CD4-positive, alpha-beta T cell (primary cell): ENCODE measurements at regions of chr3 and their contacts with region 1.

Region 1: GRCh38 chr3:170357176-170357919 is at the start of gene SKIL:
- DNase-seq: peak; percentile 93 to 100 (median 96)
- ATAC-seq: peak; percentile 74
- H3K4me3 ChIP-seq: peak within 1 kb of the TSS; percentile 73
- H3K4me3 Mint-ChIP-seq: peak within 1 kb of the TSS; percentile 98
- H3K27ac ChIP-seq: peak within 1 kb of the TSS; percentile 89 to 97
- H3K27ac Mint-ChIP-seq: peak within 1 kb of the TSS; percentile 98
- H3K4me1 ChIP-seq: peaks cover 35% of the 10 kb centered on the region
- H3K4me1 Mint-ChIP-seq: peaks cover 63% of the 10 kb centered on the region
- H3K27me3 ChIP-seq: no peaks in the 10 kb centered on the region
- H3K27me3 Mint-ChIP-seq: no peaks in the 10 kb centered on the region
- CTCF ChIP-seq: no peak
- total RNA-seq, gene SKIL: 121 to 130 TPM

Region 2: GRCh38 chr3:169764452-169765274 is 592.7 kb before region 1 on chr3 and contains the start of gene TERC:
- CTCF ChIA-PET with region 1: no interaction called
- POLR2A ChIA-PET with region 1: interaction called, 19 read pairs
- intact Hi-C with region 1: loop called (anchors 2 to 10 kb)
- DNase-seq: peak; percentile 82 to 98 (median 92)
- ATAC-seq: peak; percentile 82
- H3K4me3 ChIP-seq: peak within 1 kb of the TSS; percentile 93
- H3K4me3 Mint-ChIP-seq: peak within 1 kb of the TSS; percentile 98
- H3K27ac ChIP-seq: peak within 1 kb of the TSS; percentile 95 to 96
- H3K27ac Mint-ChIP-seq: peak within 1 kb of the TSS; percentile 97
- H3K4me1 ChIP-seq: peaks cover 27% of the 10 kb centered on the region
- H3K4me1 Mint-ChIP-seq: peaks cover 38% of the 10 kb centered on the region
- H3K27me3 ChIP-seq: no peaks in the 10 kb centered on the region
- H3K27me3 Mint-ChIP-seq: no peaks in the 10 kb centered on the region
- CTCF ChIP-seq: no peak
- total RNA-seq, gene TERC: 9.0 to 10.4 TPM

Region 3: GRCh38 chr3:170037463-170038433 is 319.6 kb before region 1 on chr3 and contains the start of gene GPR160:
- CTCF ChIA-PET with region 1: no interaction called
- POLR2A ChIA-PET with region 1: interaction called, 3 read pairs
- intact Hi-C with region 1: loop called in 1 of 2 experiments (anchors 5 kb)
- DNase-seq: peak; percentile 67 to 89 (median 74)
- ATAC-seq: peak; percentile 64
- H3K4me3 ChIP-seq: peak within 1 kb of the TSS; percentile 83
- H3K4me3 Mint-ChIP-seq: peak within 1 kb of the TSS; percentile 93
- H3K27ac ChIP-seq: peak within 1 kb of the TSS in 1 of 2 donors; percentile 41
- H3K27ac Mint-ChIP-seq: peak within 1 kb of the TSS; percentile 67
- H3K4me1 ChIP-seq: peaks cover 43% of the 10 kb centered on the region
- H3K4me1 Mint-ChIP-seq: peaks cover 43% of the 10 kb centered on the region
- H3K27me3 ChIP-seq: no peaks in the 10 kb centered on the region
- H3K27me3 Mint-ChIP-seq: no peaks in the 10 kb centered on the region
- CTCF ChIP-seq: peak; percentile 85
- total RNA-seq, gene GPR160: 5.7 TPM

Region 4: GRCh38 chr3:170221924-170222646 is 135.3 kb before region 1 on chr3 and contains the start of gene PRKCI:
- CTCF ChIA-PET with region 1: no interaction called
- POLR2A ChIA-PET with region 1: interaction called, 20 read pairs
- intact Hi-C with region 1: loop called (anchors 2 to 5 kb)
- DNase-seq: peak; percentile 79 to 96 (median 86)
- ATAC-seq: peak; percentile 84
- H3K4me3 ChIP-seq: peak within 1 kb of the TSS; percentile 72
- H3K4me3 Mint-ChIP-seq: peak within 1 kb of the TSS; percentile 95
- H3K27ac ChIP-seq: peak within 1 kb of the TSS; percentile 55 to 78
- H3K27ac Mint-ChIP-seq: peak within 1 kb of the TSS; percentile 93
- H3K4me1 ChIP-seq: peaks cover 15% of the 10 kb centered on the region
- H3K4me1 Mint-ChIP-seq: peaks cover 32% of the 10 kb centered on the region
- H3K27me3 ChIP-seq: no peaks in the 10 kb centered on the region
- H3K27me3 Mint-ChIP-seq: no peaks in the 10 kb centered on the region
- CTCF ChIP-seq: no peak
- total RNA-seq, gene PRKCI: 16.4 to 18.0 TPM

Region 5: DNA sequence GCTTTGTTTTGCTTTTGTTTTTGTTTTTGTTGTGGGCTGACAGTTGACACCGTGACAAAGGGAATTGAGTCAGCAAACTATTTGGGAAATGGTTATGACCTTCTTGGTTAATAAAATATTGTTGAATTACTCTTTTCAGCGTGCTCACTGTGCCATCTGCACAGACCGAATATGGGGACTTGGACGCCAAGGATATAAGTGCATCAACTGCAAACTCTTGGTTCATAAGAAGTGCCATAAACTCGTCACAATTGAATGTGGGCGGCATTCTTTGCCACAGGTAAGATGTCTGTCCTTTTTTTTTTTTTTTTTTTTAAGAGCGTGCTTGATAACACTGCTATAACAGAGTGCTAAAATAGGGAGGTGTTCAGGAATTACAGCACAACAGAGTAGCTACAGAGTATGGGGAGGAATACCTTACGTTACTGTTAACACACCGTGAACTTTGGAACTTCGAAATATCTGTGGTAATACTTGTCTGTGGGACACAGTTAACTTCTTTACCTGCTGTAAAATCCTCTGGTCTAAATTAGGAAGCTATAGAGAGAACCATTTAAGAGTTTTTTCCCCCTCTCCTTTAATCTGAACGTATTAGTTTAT is 87.0 kb before region 1 on chr3:
- CTCF ChIA-PET with region 1: no interaction called
- POLR2A ChIA-PET with region 1: no interaction called
- intact Hi-C with region 1: no loop called
- DNase-seq: no peak
- ATAC-seq: no peak
- H3K4me3 ChIP-seq: no peak overlapping the region
- H3K4me3 Mint-ChIP-seq: no peak overlapping the region
- H3K27ac ChIP-seq: no peak overlapping the region
- H3K27ac Mint-ChIP-seq: no peak overlapping the region
- H3K4me1 ChIP-seq: no peaks in the 10 kb centered on the region
- H3K4me1 Mint-ChIP-seq: no peaks in the 10 kb centered on the region
- H3K27me3 ChIP-seq: no peaks in the 10 kb centered on the region
- H3K27me3 Mint-ChIP-seq: no peaks in the 10 kb centered on the region
- CTCF ChIP-seq: no peak

Region 6: DNA sequence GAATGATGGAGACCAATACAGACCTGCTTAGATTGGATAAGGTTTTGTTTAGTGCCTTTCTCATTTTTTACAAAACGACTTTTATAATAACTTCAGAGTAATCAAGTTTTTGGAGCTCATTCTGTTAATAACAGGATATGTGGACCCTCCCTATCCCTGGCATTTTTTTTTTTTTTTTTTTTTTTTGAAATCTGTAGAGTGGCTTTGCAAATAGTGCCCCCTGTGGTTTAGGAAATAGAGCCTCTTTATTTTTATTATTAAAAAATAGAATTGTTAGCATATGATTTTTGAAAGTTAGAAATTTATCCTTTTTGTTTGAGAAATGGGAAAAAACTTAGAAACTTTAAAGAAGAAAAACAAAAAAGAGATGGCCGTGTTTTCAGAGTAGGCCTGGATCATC is 11.6 kb after region 1 on chr3:
- CTCF ChIA-PET with region 1: interaction called, 13 read pairs
- POLR2A ChIA-PET with region 1: interaction called, 5 read pairs
- intact Hi-C with region 1: no loop called
- DNase-seq: peak in 3 of 14 experiments; percentile 23 to 40 (median 30)
- ATAC-seq: no peak
- H3K4me3 ChIP-seq: no peak overlapping the region
- H3K4me3 Mint-ChIP-seq: no peak overlapping the region
- H3K27ac ChIP-seq: no peak overlapping the region
- H3K27ac Mint-ChIP-seq: no peak overlapping the region
- H3K4me1 ChIP-seq: peaks cover 5% of the 10 kb centered on the region
- H3K4me1 Mint-ChIP-seq: peaks cover 43% of the 10 kb centered on the region
- H3K27me3 ChIP-seq: no peaks in the 10 kb centered on the region
- H3K27me3 Mint-ChIP-seq: no peaks in the 10 kb centered on the region
- CTCF ChIP-seq: peak; percentile 48

Region 7: GRCh38 chr3:170869645-170870593 is 512.6 kb after region 1 on chr3 and contains the start of gene RPL22L1:
- CTCF ChIA-PET with region 1: no interaction called
- POLR2A ChIA-PET with region 1: interaction called, 10 read pairs
- intact Hi-C with region 1: loop called in 1 of 2 experiments (anchors 5 kb)
- DNase-seq: peak; percentile 86 to 97 (median 89)
- ATAC-seq: peak; percentile 93
- H3K4me3 ChIP-seq: peak within 1 kb of the TSS; percentile 84
- H3K4me3 Mint-ChIP-seq: peak within 1 kb of the TSS; percentile 93
- H3K27ac ChIP-seq: peak within 1 kb of the TSS; percentile 68 to 94
- H3K27ac Mint-ChIP-seq: peak within 1 kb of the TSS; percentile 93
- H3K4me1 ChIP-seq: peaks cover 25% of the 10 kb centered on the region
- H3K4me1 Mint-ChIP-seq: peaks cover 32% of the 10 kb centered on the region
- H3K27me3 ChIP-seq: no peaks in the 10 kb centered on the region
- H3K27me3 Mint-ChIP-seq: no peaks in the 10 kb centered on the region
- CTCF ChIP-seq: peak; percentile 12
- total RNA-seq, gene RPL22L1: 53.5 to 55.6 TPM